Activated T-helper 1 cell treated with anti-CD3 and anti-CD28 coated beads, Interleukin-12 subunit alpha, Interleukin-12 subunit beta, Interleukin-2, Interleukin-4 antibody, amounts not matched to agents 30 ng/mL and 10 ng/mL and 1 ng/mL, durations not matched to agents 14 hours and 24 hours and 36 hours (primary cell): ENCODE measurements at regions of chr2 and their contacts with region 1.

Region 1: DNA sequence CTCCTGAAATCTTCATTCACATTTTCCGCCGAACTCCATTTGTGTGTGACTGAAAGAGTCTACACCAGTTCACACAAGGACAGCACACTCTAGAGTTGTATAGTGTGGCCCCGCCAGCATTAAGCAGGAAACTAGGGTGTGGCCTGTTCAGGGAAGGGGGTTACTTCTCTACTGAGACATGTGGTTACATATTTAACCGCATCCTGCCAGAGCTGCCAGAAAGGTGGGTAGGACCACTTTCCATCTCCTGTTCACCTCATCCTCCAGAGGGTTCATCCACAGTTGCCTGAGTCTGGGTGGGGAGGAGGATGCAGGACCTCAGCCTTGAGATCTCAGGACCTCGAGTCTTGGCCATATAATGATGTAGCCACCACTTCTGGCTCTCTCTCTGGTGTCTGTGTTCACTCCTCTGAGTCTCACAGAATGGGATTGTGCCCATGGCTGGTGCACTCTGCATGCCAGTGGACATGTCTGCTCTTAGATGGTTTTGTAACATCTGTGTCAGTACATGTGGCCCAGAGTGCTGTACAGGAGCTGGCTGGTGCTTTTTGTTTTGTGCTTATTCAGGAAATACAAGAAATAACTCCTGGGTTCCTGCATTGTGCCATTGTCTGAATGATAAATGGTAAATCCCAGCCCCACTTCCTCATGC is 7.7 kb upstream of the SP140L start:
- DNase-seq: peak; percentile 76
- H3K4me3 Mint-ChIP-seq: peak overlapping the region; percentile 45
- H3K27ac Mint-ChIP-seq: peak overlapping the region; percentile 89
- H3K4me1 Mint-ChIP-seq: peaks cover 76% of the 10 kb centered on the region
- H3K27me3 Mint-ChIP-seq: no peaks in the 10 kb centered on the region

Region 2: GRCh38 chr2:230268606-230269243 is 50.6 kb before region 1 on chr2:
- intact Hi-C with region 1: loop called (anchors 2 kb)
- DNase-seq: no peak
- H3K4me3 Mint-ChIP-seq: peak overlapping the region; percentile 43
- H3K27ac Mint-ChIP-seq: peak overlapping the region; percentile 80
- H3K4me1 Mint-ChIP-seq: peaks cover 66% of the 10 kb centered on the region
- H3K27me3 Mint-ChIP-seq: no peaks in the 10 kb centered on the region

Region 3: DNA sequence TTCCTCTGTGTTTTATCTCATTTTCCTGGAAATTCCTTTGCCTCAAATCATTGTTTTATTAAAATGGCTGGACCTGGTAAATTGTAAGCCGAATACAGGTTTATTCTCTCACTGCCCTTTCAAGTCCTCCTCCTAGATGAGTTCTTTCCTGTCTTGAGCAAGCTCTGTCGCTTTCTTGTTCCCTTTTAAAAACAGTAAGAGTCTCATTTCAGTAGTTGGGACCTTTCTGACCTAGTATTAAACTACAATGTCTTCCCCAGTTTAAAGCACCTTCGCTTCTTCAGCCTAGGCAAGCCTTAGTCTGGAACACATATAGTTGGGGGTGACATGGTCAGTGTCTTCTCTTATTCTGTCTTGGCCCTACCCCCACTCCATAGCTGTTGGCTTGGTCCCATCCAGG is 33.3 kb before region 1 on chr2:
- intact Hi-C with region 1: loop called (anchors 2 kb)
- DNase-seq: no peak
- H3K4me3 Mint-ChIP-seq: no peak overlapping the region
- H3K27ac Mint-ChIP-seq: peak overlapping the region; percentile 6
- H3K4me1 Mint-ChIP-seq: peaks cover 35% of the 10 kb centered on the region
- H3K27me3 Mint-ChIP-seq: no peaks in the 10 kb centered on the region

Region 4: DNA sequence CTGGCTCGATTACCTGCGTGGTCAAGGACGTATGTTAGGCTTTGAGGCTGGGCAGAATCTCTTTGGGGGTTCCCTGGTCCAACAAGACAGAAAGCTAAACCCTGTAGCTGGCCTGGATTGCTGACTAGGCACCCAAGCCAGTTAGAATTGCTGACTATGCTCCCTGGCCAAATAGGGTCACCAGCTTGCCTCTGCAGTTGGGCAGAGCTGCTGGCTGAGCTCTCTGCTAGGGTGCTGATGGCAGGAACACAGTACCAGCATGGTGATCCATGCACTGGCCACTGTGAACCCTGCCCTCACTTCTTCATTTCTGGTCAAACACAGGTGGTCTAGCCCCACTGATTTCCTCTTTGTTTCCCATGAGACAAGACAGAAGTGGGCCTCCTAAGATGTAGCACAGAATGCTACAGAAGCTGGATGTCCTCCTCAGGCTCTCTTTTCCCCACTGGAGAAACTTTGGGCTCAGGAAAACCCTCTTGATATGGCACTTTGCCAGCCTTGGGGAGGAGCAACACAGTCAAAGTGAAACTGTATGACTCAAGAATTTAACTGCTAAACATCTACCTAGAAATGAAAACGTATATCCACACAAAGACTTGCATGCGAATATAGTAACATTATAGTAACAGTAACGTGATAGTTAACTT is 28.4 kb after region 1 on chr2:
- intact Hi-C with region 1: loop called (anchors 2 kb)
- DNase-seq: peak; percentile 32
- H3K4me3 Mint-ChIP-seq: peak overlapping the region; percentile 59
- H3K27ac Mint-ChIP-seq: peak overlapping the region; percentile 90
- H3K4me1 Mint-ChIP-seq: peaks cover 80% of the 10 kb centered on the region
- H3K27me3 Mint-ChIP-seq: no peaks in the 10 kb centered on the region